Esophagus squamous epithelium (tissue), 5 donors: ENCODE measurements at regions of chr5 and their contacts with region 1.

Region 1: GRCh38 chr5:149834246-149834855 is 104.2 kb downstream of the PPARGC1B start:
- DNase-seq: no peak
- H3K4me3 ChIP-seq: no peak overlapping the region
- H3K27ac ChIP-seq: no peak overlapping the region
- H3K4me1 ChIP-seq: peaks cover 0 to 20% (median 5%) of the 10 kb centered on the region in 3 donors
- H3K27me3 ChIP-seq: no peaks in the 10 kb centered on the region
- CTCF ChIP-seq: peak; percentile 10 to 72 (median 62)
- POLR2A ChIP-seq: no peak

Region 2: DNA sequence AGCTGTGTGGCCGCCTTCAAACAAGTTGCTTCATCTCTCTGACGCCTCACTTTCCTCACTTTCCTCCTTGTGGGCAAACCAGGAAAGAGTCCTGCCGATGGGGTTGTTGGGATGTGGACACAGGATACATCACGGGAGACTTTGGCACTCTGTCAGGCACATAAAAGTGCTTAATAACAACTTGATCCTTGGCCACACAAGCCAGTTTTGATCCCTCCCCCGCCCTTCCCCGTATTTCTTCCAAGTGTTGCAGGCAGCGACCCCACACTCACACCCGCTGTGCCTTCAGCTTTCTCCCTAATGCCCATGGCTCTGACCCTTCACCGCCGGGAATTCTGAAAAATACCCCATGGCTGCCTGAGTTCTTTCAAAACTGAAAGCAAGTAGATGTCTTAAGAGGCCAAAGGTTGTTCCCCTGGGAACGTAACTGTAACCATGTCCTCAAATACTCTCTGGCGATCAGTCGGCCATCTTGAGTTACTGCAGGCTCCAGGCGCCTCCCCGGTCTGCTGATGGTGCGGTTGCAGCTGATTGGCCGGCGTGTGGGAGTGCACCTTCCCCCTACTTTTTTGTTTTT is 193.3 kb before region 1 on chr5:
- intact Hi-C with region 1: loop called (anchors 5 kb)
- DNase-seq: no peak
- H3K4me3 ChIP-seq: peak overlapping the region in 1 of 4 donors; percentile 41
- H3K27ac ChIP-seq: peak overlapping the region in 3 of 4 donors; percentile 39 to 73 (median 68)
- H3K4me1 ChIP-seq: peaks cover 0 to 29% (median 5%) of the 10 kb centered on the region in 3 donors
- H3K27me3 ChIP-seq: no peaks in the 10 kb centered on the region
- CTCF ChIP-seq: peak in 2 of 6 experiments; percentile 6 to 14
- POLR2A ChIP-seq: no peak

Region 3: GRCh38 chr5:149960272-149961185 is 126.2 kb after region 1 on chr5 and contains the start of gene SLC26A2:
- intact Hi-C with region 1: loop called (anchors 5 kb)
- DNase-seq: peak; percentile 81
- H3K4me3 ChIP-seq: peak within 1 kb of the TSS; percentile 67 to 96 (median 90)
- H3K27ac ChIP-seq: peak within 1 kb of the TSS; percentile 85 to 98 (median 94)
- H3K4me1 ChIP-seq: peaks cover 13 to 44% (median 22%) of the 10 kb centered on the region in 3 donors
- H3K27me3 ChIP-seq: no peaks in the 10 kb centered on the region
- CTCF ChIP-seq: no peak
- POLR2A ChIP-seq: peak in 3 of 4 donors; percentile 78 to 93 (median 93)
- total RNA-seq, gene SLC26A2: 6.3 to 46.3 (median 29.6) TPM

Region 4: GRCh38 chr5:149988126-149988525 is 153.8 kb after region 1 on chr5:
- intact Hi-C with region 1: loop called (anchors 5 kb)
- DNase-seq: no peak
- H3K4me3 ChIP-seq: no peak overlapping the region
- H3K27ac ChIP-seq: no peak overlapping the region
- H3K4me1 ChIP-seq: no peaks in the 10 kb centered on the region
- H3K27me3 ChIP-seq: no peaks in the 10 kb centered on the region
- CTCF ChIP-seq: no peak
- POLR2A ChIP-seq: no peak